A549 (cell line): ENCODE measurements at regions of chr11 and their contacts with region 1.

Region 1: GRCh38 chr11:111938687-111939160 is 1.6 kb downstream of the DIXDC1 start:
- DNase-seq: no peak
- ATAC-seq: peak; percentile 37 to 45; a peak in 4 of 6 replicates
- H3K4me3 ChIP-seq: peak overlapping the region; percentile 71
- H3K27ac ChIP-seq: peak overlapping the region; percentile 89 to 95
- H3K4me1 ChIP-seq: peaks cover 81% of the 10 kb centered on the region
- CTCF ChIP-seq: no peak
- EP300 ChIP-seq: no peak
- POLR2A ChIP-seq: no peak
- RAD21 ChIP-seq: no peak

Region 2: DNA sequence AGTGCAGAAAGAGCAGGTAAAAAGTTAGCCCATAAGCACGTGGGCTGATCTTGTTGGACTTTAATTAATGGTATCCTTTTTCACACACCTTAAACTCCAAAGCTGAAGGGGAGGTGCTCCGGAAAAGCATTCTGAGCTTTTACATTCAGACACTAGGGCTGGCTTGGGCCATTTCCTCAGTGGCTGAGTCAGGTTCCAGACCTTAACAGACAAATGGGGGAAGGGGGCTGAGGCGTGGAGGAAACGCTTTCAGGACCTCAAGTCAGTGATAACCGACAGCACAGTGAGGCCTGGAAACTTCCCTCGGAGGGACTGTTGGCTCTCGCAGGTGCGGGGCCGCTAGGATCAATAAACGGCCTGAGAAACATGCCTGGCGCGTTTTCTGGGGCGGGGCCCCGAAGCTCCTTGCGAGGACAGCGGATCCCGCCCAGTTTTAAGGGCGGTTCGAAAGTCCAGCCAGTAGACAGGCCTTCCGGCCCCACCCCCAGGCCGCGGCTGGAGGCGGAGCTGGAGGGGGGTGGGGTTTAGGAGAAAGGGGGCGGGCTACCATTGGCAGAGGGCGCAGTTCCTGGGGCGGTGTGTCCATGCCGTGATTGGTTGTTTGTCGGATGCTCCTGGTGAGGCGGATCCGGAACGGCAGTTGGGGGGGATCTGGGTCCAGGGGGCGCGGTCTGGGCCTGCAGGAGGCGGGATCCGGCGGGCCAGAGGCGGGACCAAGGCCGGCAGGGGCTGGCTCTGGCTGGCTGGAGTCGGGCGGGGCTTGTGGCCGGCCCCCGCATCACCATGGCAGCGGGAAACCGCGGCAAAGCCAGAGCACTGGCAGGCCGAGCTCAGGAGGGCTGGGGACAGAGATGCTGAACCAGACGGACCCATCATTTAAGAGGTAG is 12.0 kb before region 1 on chr11:
- CTCF ChIA-PET with region 1: interaction called, 19 read pairs
- POLR2A ChIA-PET with region 1: interaction called, 17 read pairs
- DNase-seq: peak; percentile 85 to 93
- ATAC-seq: peak; percentile 91 to 93
- H3K4me3 ChIP-seq: peak overlapping the region; percentile 38
- H3K27ac ChIP-seq: peak overlapping the region; percentile 73 to 92
- H3K4me1 ChIP-seq: peaks cover 44% of the 10 kb centered on the region
- CTCF ChIP-seq: no peak
- EP300 ChIP-seq: no peak
- POLR2A ChIP-seq: peak; percentile 63
- RAD21 ChIP-seq: no peak

Region 3: GRCh38 chr11:112100462-112100861 is 161.7 kb after region 1 on chr11:
- CTCF ChIA-PET with region 1: no interaction called
- POLR2A ChIA-PET with region 1: no interaction called
- DNase-seq: no peak
- ATAC-seq: no peak
- H3K4me3 ChIP-seq: no peak overlapping the region
- H3K27ac ChIP-seq: no peak overlapping the region
- H3K4me1 ChIP-seq: no peaks in the 10 kb centered on the region
- CTCF ChIP-seq: no peak
- EP300 ChIP-seq: no peak
- POLR2A ChIP-seq: no peak
- RAD21 ChIP-seq: no peak